CD4-positive, alpha-beta memory T cell (primary cell): ENCODE measurements at regions of chr11 and their contacts with region 1.

Region 1: GRCh38 chr11:112086422-112087191 is at the starts of genes SDHD and TIMM8B:
- DNase-seq: peak; percentile 96 to 98 (median 97)
- H3K4me3 ChIP-seq: peak within 1 kb of the TSS; percentile 97 to 100
- H3K4me3 Mint-ChIP-seq: peak within 1 kb of the TSS; percentile 93 to 100 (median 99)
- H3K27ac ChIP-seq: peak within 1 kb of the TSS; percentile 79
- H3K27ac Mint-ChIP-seq: peak within 1 kb of the TSS; percentile 91 to 100 (median 99)
- H3K4me1 ChIP-seq: peaks cover 39% of the 10 kb centered on the region
- H3K4me1 Mint-ChIP-seq: peaks cover 41 to 62% (median 49%) of the 10 kb centered on the region in 4 donors
- H3K27me3 ChIP-seq: no peaks in the 10 kb centered on the region
- H3K27me3 Mint-ChIP-seq: no peaks in the 10 kb centered on the region
- total RNA-seq, gene SDHD: 61.2 to 65.5 TPM
- total RNA-seq, gene TIMM8B: 26.2 to 28.0 TPM

Region 2: DNA sequence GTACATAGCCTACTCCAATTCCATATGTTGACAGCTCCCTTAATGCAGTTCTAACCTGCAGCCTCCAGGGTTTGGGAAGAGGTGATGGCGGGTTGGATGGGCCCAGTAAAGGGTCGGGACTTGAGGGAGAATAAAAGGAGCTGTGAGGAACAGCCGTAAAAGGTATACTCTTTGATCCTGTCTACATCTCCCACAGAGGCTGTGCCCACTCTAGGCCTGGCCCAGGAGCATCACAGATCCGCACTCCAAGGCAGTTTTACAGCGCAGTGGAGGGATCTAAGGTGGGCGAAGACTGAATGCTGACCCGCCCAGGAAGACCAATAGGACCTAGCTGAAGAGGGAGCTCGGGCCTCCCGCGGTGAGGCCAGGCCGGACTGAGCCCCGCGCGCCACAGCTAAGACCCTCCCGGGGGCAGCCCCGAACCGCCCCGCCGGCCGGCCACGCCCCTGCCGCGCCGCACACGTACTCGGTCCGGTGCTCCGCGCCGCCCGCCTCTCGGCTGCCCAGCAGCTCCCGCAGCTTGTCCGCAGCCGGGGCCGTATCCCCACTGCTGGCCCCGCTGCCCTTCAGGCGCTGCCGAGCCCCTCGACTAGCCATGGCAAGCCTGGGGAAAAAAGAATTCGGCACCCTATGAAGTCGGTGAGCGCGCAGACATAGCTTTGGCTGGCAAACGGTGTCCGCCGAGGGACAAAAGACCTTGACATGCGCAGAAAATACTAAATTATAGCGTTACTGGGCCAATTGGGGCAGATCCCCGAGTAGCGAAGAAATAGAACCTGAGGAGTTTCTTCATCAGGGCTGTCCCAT is 215.5 kb before region 1 on chr11 and contains the start of gene ALG9:
- CTCF ChIA-PET with region 1: no interaction called
- POLR2A ChIA-PET with region 1: interaction called, 11 read pairs
- intact Hi-C with region 1: loop called (anchors 2 kb)
- DNase-seq: peak; percentile 88 to 92 (median 88)
- H3K4me3 ChIP-seq: peak within 1 kb of the TSS; percentile 79
- H3K4me3 Mint-ChIP-seq: peak within 1 kb of the TSS; percentile 91 to 96 (median 94)
- H3K27ac ChIP-seq: peak within 1 kb of the TSS; percentile 91
- H3K27ac Mint-ChIP-seq: peak within 1 kb of the TSS; percentile 94 to 98 (median 96)
- H3K4me1 ChIP-seq: peaks cover 22% of the 10 kb centered on the region
- H3K4me1 Mint-ChIP-seq: peaks cover 10 to 37% (median 26%) of the 10 kb centered on the region in 4 donors
- H3K27me3 ChIP-seq: no peaks in the 10 kb centered on the region
- H3K27me3 Mint-ChIP-seq: no peaks in the 10 kb centered on the region
- total RNA-seq, gene ALG9: 28.2 to 28.3 TPM

Region 3: DNA sequence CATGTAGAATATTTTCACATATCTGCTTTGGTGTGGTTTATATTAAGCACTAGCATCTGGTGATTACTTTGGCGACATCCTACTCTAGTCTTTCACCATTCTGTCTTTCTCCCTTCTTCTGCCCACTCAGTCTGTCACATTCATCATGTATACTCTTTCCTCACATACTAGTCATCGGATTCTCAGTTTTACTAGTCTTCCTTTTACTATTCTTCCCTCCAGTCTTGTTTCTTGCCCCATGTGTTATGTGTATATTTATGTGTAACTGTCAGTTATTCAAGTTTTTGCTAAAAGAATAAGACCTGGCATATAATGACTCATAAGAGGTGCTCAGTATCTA is 154.0 kb before region 1 on chr11:
- CTCF ChIA-PET with region 1: interaction called, 10 read pairs
- POLR2A ChIA-PET with region 1: interaction called, 13 read pairs
- intact Hi-C with region 1: loop called (anchors 1 kb)
- DNase-seq: no peak
- H3K4me3 ChIP-seq: no peak overlapping the region
- H3K4me3 Mint-ChIP-seq: peak overlapping the region in 5 of 8 donors; percentile 1 to 46 (median 32)
- H3K27ac ChIP-seq: no peak overlapping the region
- H3K27ac Mint-ChIP-seq: peak overlapping the region in 1 of 7 donors; percentile 38
- H3K4me1 ChIP-seq: peaks cover 25% of the 10 kb centered on the region
- H3K4me1 Mint-ChIP-seq: peaks cover 10 to 26% (median 14%) of the 10 kb centered on the region in 4 donors
- H3K27me3 ChIP-seq: no peaks in the 10 kb centered on the region
- H3K27me3 Mint-ChIP-seq: peaks cover 3 to 4% of the 10 kb centered on the region in 2 donors

Region 4: DNA sequence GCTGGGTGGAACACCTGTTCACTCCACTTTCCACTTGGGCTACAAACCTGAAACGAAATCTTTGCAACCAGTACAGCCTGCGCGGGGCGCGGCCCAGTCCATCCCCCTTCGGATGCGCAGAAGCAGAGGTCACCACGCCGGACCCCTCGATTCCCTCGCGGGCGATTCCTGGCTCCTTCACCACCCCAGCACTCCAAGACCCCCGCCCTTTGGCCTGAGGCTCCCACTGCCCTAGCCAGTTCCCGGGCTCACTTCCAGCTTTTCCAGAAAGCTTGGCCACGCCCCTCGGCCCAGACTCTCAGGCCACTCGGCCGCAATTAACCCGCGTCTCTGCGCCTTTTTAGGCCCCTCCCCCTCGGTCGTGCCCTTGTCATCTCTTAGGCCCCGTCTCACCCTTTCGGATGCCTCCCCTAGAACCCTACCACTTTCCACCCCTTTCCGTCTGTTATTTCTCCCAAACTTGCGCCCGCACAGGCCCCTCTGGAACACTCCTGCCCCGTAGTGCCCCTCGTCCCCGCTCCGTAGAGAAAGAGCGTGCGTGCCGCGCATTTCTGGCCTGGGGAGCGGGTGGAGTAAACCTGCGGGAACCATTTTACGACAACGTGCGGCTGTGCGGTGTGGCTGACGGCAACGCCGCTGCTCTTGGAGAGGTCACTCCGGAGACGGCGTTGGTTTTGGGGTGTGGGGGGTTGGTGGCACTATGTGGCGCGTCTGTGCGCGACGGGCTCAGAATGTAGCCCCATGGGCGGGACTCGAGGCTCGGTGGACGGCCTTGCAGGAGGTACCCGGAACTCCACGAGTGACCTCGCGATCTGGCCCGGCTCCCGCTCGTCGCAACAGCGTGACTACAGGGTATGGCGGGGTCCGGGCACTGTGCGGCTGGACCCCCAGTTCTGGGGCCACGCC is 61.6 kb before region 1 on chr11 and contains the start of gene DLAT:
- CTCF ChIA-PET with region 1: no interaction called
- POLR2A ChIA-PET with region 1: interaction called, 3 read pairs
- intact Hi-C with region 1: loop called (anchors 1 kb)
- DNase-seq: peak; percentile 85 to 89 (median 86)
- H3K4me3 ChIP-seq: peak within 1 kb of the TSS; percentile 99 to 100
- H3K4me3 Mint-ChIP-seq: peak within 1 kb of the TSS; percentile 97 to 100 (median 100)
- H3K27ac ChIP-seq: peak within 1 kb of the TSS; percentile 78
- H3K27ac Mint-ChIP-seq: peak within 1 kb of the TSS; percentile 92 to 100 (median 99)
- H3K4me1 ChIP-seq: peaks cover 15% of the 10 kb centered on the region
- H3K4me1 Mint-ChIP-seq: peaks cover 13 to 41% (median 27%) of the 10 kb centered on the region in 4 donors
- H3K27me3 ChIP-seq: no peaks in the 10 kb centered on the region
- H3K27me3 Mint-ChIP-seq: no peaks in the 10 kb centered on the region
- total RNA-seq, gene DLAT: 19.4 to 21.6 TPM

Region 5: DNA sequence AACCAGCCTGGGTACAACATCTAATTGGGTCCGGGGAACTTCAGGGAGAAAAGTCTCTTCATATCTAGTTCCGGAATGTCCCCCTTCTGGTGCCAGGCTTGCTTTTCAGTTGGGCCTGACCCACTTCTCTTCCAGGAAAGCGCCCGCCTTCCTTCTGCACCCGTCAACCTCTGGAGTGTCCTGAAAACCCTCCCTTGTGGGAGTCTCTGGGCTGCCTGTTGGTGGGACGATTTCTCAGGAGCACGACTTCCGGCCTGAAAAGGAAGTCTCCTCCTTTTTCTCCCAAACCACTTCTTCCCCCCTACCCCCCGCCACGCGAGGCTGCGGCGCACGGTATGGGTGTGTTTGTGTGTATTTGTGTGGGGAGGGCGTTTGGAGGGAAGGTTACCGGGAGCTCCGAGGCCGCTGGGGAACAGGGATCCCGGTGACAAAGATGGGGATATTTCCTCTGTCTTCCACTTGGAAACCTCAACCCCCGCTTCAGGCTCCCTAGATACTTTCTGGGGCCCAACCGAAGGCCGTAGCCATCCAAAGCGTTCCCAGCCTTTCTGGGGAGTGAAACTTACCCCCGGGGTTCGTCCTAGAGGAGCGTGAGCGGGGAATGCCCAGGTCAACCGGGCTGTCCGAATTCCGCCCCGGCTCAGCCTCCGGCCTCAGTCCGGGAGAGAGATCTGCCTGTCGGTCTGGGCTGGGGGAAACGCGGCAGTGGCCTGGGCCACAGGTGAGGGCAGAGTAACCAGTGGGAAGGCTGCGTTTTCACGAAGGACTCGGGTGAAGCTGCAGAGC is 12.4 kb before region 1 on chr11 and contains the start of gene NKAPD1:
- CTCF ChIA-PET with region 1: interaction called, 3 read pairs
- POLR2A ChIA-PET with region 1: interaction called, 18 read pairs
- intact Hi-C with region 1: loop called (anchors 1 kb)
- DNase-seq: peak; percentile 85 to 90 (median 86)
- H3K4me3 ChIP-seq: peak within 1 kb of the TSS; percentile 96 to 97
- H3K4me3 Mint-ChIP-seq: peak within 1 kb of the TSS; percentile 85 to 97 (median 94)
- H3K27ac ChIP-seq: peak within 1 kb of the TSS; percentile 80
- H3K27ac Mint-ChIP-seq: peak within 1 kb of the TSS; percentile 79 to 98 (median 96)
- H3K4me1 ChIP-seq: peaks cover 23% of the 10 kb centered on the region
- H3K4me1 Mint-ChIP-seq: peaks cover 26 to 36% (median 30%) of the 10 kb centered on the region in 4 donors
- H3K27me3 ChIP-seq: no peaks in the 10 kb centered on the region
- H3K27me3 Mint-ChIP-seq: peaks cover 6 to 7% of the 10 kb centered on the region in 2 donors
- total RNA-seq, gene NKAPD1: 20.9 to 21.2 TPM

Region 6: GRCh38 chr11:112106070-112106469 is 19.5 kb after region 1 on chr11:
- CTCF ChIA-PET with region 1: no interaction called
- POLR2A ChIA-PET with region 1: no interaction called
- intact Hi-C with region 1: no loop called
- DNase-seq: no peak
- H3K4me3 ChIP-seq: no peak overlapping the region
- H3K4me3 Mint-ChIP-seq: no peak overlapping the region
- H3K27ac ChIP-seq: no peak overlapping the region
- H3K27ac Mint-ChIP-seq: no peak overlapping the region
- H3K4me1 ChIP-seq: no peaks in the 10 kb centered on the region
- H3K4me1 Mint-ChIP-seq: peaks cover 0 to 2% (median 0%) of the 10 kb centered on the region in 4 donors
- H3K27me3 ChIP-seq: no peaks in the 10 kb centered on the region
- H3K27me3 Mint-ChIP-seq: no peaks in the 10 kb centered on the region

Region 7: DNA sequence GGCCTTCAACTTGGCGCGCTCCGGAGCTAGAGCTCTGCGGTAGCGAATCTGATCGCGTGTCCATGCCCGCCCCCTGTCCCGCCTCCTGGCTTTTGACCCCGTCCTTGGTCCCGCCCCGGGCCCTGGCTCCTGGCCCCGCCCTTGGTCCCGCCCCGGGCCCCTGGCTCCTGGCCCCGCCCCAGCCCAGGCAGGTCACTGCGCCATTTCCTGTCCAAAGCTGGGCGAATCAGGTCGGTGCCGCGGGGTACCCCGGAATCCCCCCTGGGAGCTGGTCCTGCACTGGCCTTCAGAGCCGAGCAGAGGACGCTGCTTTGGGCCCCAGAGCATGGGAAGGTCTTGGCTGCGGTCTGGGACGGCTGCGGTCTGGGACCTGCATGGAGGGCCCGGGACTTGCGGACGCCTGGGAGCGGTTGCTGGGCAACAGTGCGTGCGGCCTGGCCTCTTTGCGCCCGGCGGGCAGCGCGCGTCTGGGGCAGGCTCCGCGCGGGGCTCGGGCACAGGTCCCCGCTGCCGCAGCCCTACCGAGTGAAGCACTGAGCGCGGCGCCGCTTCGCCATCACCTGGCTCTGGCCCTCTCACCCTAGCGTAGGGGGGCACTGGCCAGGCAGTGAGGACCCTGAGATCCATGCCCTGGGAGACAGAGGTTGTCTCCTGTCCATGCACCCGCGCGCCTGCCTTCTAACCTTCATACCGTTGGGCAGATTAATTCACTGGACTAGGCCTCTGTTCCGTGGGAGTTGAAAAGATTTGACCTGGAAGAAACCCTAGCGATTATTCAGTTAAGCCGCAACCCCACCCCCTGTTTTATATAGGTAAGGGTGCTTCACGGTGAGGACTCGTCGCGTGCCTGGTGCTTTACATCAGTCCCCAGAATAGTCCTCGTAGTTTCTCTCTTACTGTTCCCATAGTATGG is 1228.0 kb after region 1 on chr11 and contains the start of gene TTC12:
- CTCF ChIA-PET with region 1: no interaction called
- POLR2A ChIA-PET with region 1: no interaction called
- intact Hi-C with region 1: loop called (anchors 2 kb)
- DNase-seq: peak; percentile 87 to 91 (median 89)
- H3K4me3 ChIP-seq: peak within 1 kb of the TSS; percentile 24 to 84
- H3K4me3 Mint-ChIP-seq: peak within 1 kb of the TSS; percentile 79 to 91 (median 88)
- H3K27ac ChIP-seq: peak within 1 kb of the TSS; percentile 85
- H3K27ac Mint-ChIP-seq: peak within 1 kb of the TSS; percentile 79 to 95 (median 94)
- H3K4me1 ChIP-seq: peaks cover 20% of the 10 kb centered on the region
- H3K4me1 Mint-ChIP-seq: peaks cover 27 to 52% (median 38%) of the 10 kb centered on the region in 4 donors
- H3K27me3 ChIP-seq: no peaks in the 10 kb centered on the region
- H3K27me3 Mint-ChIP-seq: no peaks in the 10 kb centered on the region
- total RNA-seq, gene TTC12: 69.2 to 75.1 TPM